Aorta (tissue), 5 donors: ENCODE measurements at regions of chr22 and their contacts with region 1.

Region 1: GRCh38 chr22:49936018-49936952 is 17.9 kb downstream of the CRELD2 start:
- DNase-seq: peak; percentile 97
- ATAC-seq: peak; percentile 87
- H3K4me3 ChIP-seq: peak overlapping the region; percentile 4 to 23
- H3K27ac ChIP-seq: peak overlapping the region in 1 of 2 donors; percentile 4
- H3K4me1 ChIP-seq: peaks cover 1 to 2% of the 10 kb centered on the region in 2 donors
- H3K27me3 ChIP-seq: no peaks in the 10 kb centered on the region

Region 2: DNA sequence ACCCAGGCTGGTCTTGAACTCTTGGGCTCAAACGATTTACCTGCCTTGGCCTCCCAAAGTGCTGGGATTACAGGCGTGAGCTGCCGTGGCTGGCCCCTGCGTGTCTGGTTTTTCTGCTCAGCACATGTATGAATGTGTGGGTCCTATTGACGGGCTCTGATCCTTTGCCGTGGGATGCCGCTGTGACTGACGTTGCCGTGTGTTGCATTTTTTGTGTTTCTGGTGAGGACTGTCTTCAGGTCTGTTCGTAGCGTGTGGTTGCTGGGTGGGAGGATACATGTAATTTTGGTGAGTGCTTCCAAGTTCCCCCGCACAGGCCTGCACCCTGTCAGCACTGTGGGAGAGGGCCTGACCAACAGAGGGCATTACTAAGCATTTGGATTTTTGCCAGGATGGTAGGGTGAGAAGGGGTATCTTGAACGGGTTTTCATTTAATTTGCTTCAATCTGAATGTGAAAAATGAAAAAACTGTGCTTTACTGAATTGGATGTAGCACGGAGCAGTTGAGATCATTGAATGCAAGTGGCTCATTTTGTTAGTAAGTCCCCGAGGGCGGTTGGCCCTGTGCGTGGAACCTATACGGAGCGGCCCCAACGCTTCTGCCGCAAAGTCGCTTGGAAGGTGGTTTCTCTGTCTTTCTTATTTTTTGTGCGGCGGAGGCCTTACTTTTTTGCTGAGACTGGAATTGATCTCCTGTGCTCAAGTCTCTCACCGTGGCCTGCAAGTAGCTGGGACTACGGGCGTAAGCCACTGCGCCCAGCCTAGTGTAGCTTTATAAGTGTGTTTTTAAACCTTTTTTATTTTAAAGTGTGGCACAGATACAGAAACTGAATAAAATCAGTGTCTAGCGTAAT is 74.4 kb before region 1 on chr22:
- intact Hi-C with region 1: no loop called
- DNase-seq: peak in 1 of 2 donors; percentile 38
- ATAC-seq: no peak
- H3K4me3 ChIP-seq: no peak overlapping the region
- H3K27ac ChIP-seq: no peak overlapping the region
- H3K4me1 ChIP-seq: no peaks in the 10 kb centered on the region
- H3K27me3 ChIP-seq: no peaks in the 10 kb centered on the region

Region 3: GRCh38 chr22:49917974-49918910 is 18.0 kb before region 1 on chr22 and contains the starts of genes ALG12 and CRELD2:
- intact Hi-C with region 1: loop called in 1 of 2 experiments (anchors 2 kb)
- DNase-seq: peak; percentile 99
- ATAC-seq: peak; percentile 98
- H3K4me3 ChIP-seq: peak within 1 kb of the TSS; percentile 61 to 68
- H3K27ac ChIP-seq: peak within 1 kb of the TSS in 1 of 2 donors; percentile 56
- H3K4me1 ChIP-seq: no peaks in the 10 kb centered on the region
- H3K27me3 ChIP-seq: no peaks in the 10 kb centered on the region
- total RNA-seq, gene ALG12: 13.7 to 18.7 TPM
- total RNA-seq, gene CRELD2: 31.2 to 41.6 TPM

Region 4: DNA sequence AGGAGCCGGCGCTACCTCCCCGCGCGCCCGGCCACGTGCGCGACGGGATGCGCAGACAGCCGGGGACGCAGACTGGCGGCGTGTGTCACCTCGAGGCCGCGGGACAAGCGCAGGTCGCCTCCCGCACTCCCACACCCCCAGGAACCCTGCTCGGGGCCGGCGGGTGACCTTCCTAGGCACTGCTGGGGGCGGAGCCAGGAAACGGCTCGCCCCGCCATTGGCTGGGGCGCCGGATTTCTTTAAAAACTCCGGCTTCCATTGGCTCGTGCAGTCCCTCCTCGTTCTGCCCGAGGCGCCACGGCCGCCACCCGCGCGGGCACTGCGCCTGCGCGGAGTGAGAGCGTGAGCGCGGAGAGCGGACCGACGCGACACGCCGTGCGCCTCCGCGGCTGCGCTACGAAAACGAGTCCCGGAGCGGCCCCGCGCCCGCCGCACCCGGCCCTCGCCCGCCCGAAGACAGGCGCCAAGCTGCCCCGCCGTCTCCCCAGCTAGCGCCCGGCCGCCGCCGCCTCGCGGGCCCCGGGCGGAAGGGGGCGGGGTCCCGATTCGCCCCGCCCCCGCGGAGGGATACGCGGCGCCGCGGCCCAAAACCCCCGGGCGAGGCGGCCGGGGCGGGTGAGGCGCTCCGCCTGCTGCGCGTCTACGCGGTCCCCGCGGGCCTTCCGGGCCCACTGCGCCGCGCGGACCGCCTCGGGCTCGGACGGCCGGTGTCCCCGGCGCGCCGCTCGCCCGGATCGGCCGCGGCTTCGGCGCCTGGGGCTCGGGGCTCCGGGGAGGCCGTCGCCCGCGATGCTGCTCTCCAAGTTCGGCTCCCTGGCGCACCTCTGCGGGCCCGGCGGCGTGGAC is 24.1 kb after region 1 on chr22 and contains the start of gene PIM3:
- intact Hi-C with region 1: loop called in 1 of 2 experiments (anchors 2 kb)
- DNase-seq: peak; percentile 95 to 96
- ATAC-seq: peak; percentile 88
- H3K4me3 ChIP-seq: peak within 1 kb of the TSS; percentile 81 to 86
- H3K27ac ChIP-seq: peak within 1 kb of the TSS in 1 of 2 donors; percentile 60
- H3K4me1 ChIP-seq: no peaks in the 10 kb centered on the region
- H3K27me3 ChIP-seq: no peaks in the 10 kb centered on the region
- total RNA-seq, gene PIM3: 41.4 to 74.9 TPM

Region 5: GRCh38 chr22:49970528-49971231 is 34.4 kb after region 1 on chr22:
- intact Hi-C with region 1: loop called in 1 of 2 experiments (anchors 2 kb)
- DNase-seq: peak; percentile 98 to 99
- ATAC-seq: peak; percentile 93
- H3K4me3 ChIP-seq: peak overlapping the region; percentile 9 to 14
- H3K27ac ChIP-seq: peak overlapping the region in 1 of 2 donors; percentile 25
- H3K4me1 ChIP-seq: no peaks in the 10 kb centered on the region
- H3K27me3 ChIP-seq: no peaks in the 10 kb centered on the region

Region 6: GRCh38 chr22:50085211-50085972 is 149.1 kb after region 1 on chr22 and contains the start of gene MLC1:
- intact Hi-C with region 1: no loop called
- DNase-seq: peak in 1 of 2 donors; percentile 73
- ATAC-seq: no peak
- H3K4me3 ChIP-seq: no peak within 1 kb of the TSS
- H3K27ac ChIP-seq: no peak within 1 kb of the TSS
- H3K4me1 ChIP-seq: no peaks in the 10 kb centered on the region
- H3K27me3 ChIP-seq: no peaks in the 10 kb centered on the region
- total RNA-seq, gene MLC1: 0.16 to 0.39 TPM

Region 7: DNA sequence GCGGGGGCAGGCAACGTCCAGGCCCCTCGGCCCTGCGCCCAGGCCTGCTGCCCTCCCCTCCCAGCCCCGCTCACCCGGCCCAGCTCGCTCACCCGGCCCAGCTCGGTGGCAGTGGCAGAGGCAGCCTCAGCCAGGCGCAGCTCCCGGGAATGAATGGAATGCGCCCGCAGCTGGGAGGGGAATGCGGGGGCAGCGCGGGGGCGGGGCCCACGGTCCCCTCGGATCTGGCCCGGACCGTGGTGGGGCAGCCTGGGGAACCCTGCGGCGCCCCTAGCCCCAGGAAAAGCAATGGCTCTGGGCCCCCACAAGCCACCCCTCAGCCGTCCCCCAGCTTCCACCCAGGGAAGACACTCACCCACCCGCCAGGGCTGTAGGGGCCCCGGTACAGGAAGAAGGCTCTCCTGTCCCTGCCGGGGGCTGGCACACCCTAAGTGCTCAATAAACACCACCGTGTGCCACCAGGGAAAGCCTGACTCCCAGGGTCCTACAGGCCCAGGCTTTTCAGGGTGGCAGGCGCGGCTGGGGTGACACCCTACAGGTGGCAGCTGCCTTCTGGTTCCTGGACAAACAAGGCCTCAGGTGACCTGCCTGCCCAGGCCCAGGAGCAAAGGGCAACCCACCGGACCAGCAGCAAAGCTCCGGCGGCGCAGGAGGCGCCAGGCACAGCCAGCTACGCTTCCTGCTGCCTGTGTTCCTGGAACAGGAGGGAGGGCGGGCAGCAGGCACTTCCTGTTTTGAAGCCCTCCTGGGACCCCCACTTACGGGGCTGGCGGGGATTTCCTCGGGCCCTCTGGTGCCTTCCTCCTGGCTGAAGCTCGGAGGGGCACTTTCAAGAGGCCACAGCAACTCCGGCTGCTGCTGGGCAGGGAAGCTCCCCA is 357.4 kb after region 1 on chr22:
- intact Hi-C with region 1: no loop called
- DNase-seq: peak; percentile 87 to 93
- ATAC-seq: peak; percentile 85
- H3K4me3 ChIP-seq: no peak overlapping the region
- H3K27ac ChIP-seq: peak overlapping the region; percentile 1 to 90
- H3K4me1 ChIP-seq: no peaks in the 10 kb centered on the region
- H3K27me3 ChIP-seq: no peaks in the 10 kb centered on the region